ENCODE measurements at regions of chr14 and their contacts with region 1.

Region 1: DNA sequence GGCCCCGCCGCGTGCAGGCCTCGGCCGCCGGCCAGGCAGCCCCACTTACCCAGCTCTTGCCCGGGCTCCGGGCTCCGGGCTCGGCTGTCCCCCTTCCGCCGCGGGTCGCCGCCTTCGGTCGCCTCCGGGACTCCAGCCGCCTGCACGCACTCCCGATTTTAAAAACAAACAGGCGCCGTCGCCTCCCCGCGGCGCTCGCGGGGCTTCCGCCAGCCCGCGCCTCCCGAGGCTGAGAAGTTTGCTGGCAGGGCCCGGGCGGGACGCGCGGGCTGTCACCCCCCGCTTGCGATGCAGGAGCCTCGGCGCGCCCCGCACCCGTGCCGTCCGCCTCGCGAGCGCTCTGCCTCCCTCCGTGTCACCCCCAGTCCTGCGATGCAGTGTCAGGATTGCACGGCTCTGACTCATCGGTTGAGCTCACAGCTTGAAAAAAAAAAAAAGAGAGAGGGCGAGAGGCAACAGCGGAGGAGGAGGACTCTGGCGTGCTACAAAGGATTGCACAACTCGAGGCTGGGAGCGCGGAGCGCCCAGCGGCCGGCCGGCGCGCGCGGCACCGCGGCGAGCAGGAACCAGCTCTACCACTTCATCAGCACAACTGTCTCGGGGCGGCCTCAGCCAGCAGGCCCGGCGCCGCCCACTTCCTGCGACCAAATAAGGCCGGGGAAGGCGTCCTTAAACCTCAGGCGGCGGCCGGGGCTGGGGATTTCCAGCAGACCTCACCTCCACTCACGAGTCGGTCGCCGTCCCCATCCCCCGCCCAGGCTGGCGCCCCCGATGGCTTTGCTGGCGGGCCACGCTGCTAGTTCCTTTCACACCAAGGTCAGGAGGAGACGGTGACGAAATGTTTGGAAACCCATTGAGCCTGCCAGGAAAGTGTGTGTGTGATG is 45.8 kb upstream of the PNMA1 start:
- DNase-seq: peak; percentile 96 to 98 (median 98)
- H3K4me3 ChIP-seq: peak overlapping the region; percentile 72
- H3K4me3 Mint-ChIP-seq: peak overlapping the region; percentile 81 to 98 (median 92)
- H3K27ac ChIP-seq: peak overlapping the region; percentile 87
- H3K27ac Mint-ChIP-seq: peak overlapping the region; percentile 96 to 100 (median 99)
- H3K4me1 ChIP-seq: peaks cover 78% of the 10 kb centered on the region
- H3K4me1 Mint-ChIP-seq: peaks cover 78 to 85% (median 81%) of the 10 kb centered on the region in 3 donors
- H3K27me3 ChIP-seq: no peaks in the 10 kb centered on the region
- H3K27me3 Mint-ChIP-seq: peaks cover 0 to 4% of the 10 kb centered on the region in 2 donors

Region 2: DNA sequence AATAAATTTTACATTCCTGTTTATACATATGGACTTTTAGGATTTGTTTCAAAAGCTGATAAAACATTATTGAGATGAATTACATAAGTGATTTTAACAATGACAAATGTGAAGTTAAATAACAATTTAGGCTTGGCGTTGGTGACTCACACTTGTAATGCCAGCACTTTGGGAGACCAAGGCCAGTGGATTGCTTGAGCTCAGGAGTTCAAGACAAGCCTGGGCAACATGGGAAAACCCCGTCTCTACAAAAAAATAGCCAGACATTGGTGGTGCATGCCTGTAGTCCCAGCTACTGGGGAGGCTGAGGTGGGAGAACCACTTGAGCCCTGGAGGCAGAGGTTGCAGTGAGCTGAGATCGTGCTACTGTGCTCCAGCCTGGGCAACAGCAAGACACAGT is 183.6 kb before region 1 on chr14:
- CTCF ChIA-PET with region 1: no interaction called
- POLR2A ChIA-PET with region 1: no interaction called
- DNase-seq: no peak
- H3K4me3 ChIP-seq: no peak overlapping the region
- H3K4me3 Mint-ChIP-seq: no peak overlapping the region
- H3K27ac ChIP-seq: no peak overlapping the region
- H3K27ac Mint-ChIP-seq: no peak overlapping the region
- H3K4me1 ChIP-seq: no peaks in the 10 kb centered on the region
- H3K4me1 Mint-ChIP-seq: no peaks in the 10 kb centered on the region
- H3K27me3 ChIP-seq: no peaks in the 10 kb centered on the region
- H3K27me3 Mint-ChIP-seq: no peaks in the 10 kb centered on the region

Region 3: GRCh38 chr14:73700325-73700724 is 59.6 kb before region 1 on chr14:
- CTCF ChIA-PET with region 1: no interaction called
- POLR2A ChIA-PET with region 1: no interaction called
- DNase-seq: no peak
- H3K4me3 ChIP-seq: no peak overlapping the region
- H3K4me3 Mint-ChIP-seq: no peak overlapping the region
- H3K27ac ChIP-seq: no peak overlapping the region
- H3K27ac Mint-ChIP-seq: peak overlapping the region in 1 of 8 donors; percentile 7
- H3K4me1 ChIP-seq: no peaks in the 10 kb centered on the region
- H3K4me1 Mint-ChIP-seq: no peaks in the 10 kb centered on the region
- H3K27me3 ChIP-seq: no peaks in the 10 kb centered on the region
- H3K27me3 Mint-ChIP-seq: no peaks in the 10 kb centered on the region

Region 4: GRCh38 chr14:73728717-73729330 is 31.1 kb before region 1 on chr14:
- CTCF ChIA-PET with region 1: interaction called, 208 read pairs
- POLR2A ChIA-PET with region 1: interaction called, 8 read pairs
- DNase-seq: peak; percentile 71 to 87 (median 83)
- H3K4me3 ChIP-seq: no peak overlapping the region
- H3K4me3 Mint-ChIP-seq: no peak overlapping the region
- H3K27ac ChIP-seq: peak overlapping the region; percentile 17
- H3K27ac Mint-ChIP-seq: peak overlapping the region; percentile 71 to 94 (median 84)
- H3K4me1 ChIP-seq: peaks cover 9% of the 10 kb centered on the region
- H3K4me1 Mint-ChIP-seq: peaks cover 11 to 45% (median 23%) of the 10 kb centered on the region in 3 donors
- H3K27me3 ChIP-seq: no peaks in the 10 kb centered on the region
- H3K27me3 Mint-ChIP-seq: no peaks in the 10 kb centered on the region

Region 5: GRCh38 chr14:73746520-73747378 is 13.2 kb before region 1 on chr14:
- CTCF ChIA-PET with region 1: interaction called, 137 read pairs
- POLR2A ChIA-PET with region 1: interaction called, 67 read pairs
- DNase-seq: no peak
- H3K4me3 ChIP-seq: no peak overlapping the region
- H3K4me3 Mint-ChIP-seq: peak overlapping the region in 5 of 7 donors; percentile 8 to 59 (median 43)
- H3K27ac ChIP-seq: peak overlapping the region; percentile 21
- H3K27ac Mint-ChIP-seq: peak overlapping the region; percentile 68 to 98 (median 79)
- H3K4me1 ChIP-seq: peaks cover 98% of the 10 kb centered on the region
- H3K4me1 Mint-ChIP-seq: peaks cover 89 to 100% (median 97%) of the 10 kb centered on the region in 3 donors
- H3K27me3 ChIP-seq: no peaks in the 10 kb centered on the region
- H3K27me3 Mint-ChIP-seq: no peaks in the 10 kb centered on the region

Region 6: DNA sequence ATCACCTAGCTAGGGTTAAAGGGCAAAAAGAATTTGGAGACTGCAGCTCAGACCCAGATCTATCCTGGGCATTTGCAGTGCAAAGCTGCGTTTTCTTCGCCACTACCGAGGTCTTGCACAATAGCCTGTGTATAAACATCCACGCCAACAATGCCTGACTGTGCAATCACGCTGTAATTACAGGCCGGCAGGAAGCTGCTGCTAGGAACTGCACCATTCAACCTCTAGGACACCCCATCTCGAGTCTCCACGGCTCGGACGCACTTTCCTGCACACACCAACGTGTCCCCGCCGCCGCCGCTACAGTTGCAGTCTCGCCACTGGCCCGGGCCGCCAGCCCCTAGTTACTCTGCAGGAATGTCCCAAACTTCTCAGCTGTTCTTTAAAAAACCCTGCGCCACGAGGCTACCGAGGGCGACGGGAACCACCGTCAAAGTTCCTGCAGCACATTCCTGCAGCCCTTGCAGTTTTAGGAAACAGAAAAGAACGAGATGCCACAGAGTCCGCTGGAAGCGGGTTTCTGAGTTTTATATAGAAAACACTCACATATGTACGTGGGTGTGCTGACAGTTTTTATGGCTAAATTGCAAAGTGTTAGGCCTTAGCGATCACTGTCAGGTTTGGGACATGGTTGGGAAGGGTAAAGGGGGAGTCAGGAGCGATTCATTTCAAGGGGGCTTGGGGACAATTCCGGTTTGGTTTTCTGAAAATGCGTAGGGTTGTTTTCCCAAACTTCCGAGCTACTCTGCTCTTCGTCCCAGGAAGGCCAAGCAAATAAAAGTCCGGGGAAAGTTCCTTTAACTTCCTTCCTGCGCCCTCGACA is 26.1 kb after region 1 on chr14:
- CTCF ChIA-PET with region 1: interaction called, 358 read pairs
- POLR2A ChIA-PET with region 1: interaction called, 215 read pairs
- DNase-seq: peak; percentile 48 to 79 (median 60)
- H3K4me3 ChIP-seq: peak overlapping the region; percentile 73
- H3K4me3 Mint-ChIP-seq: peak overlapping the region; percentile 90 to 99 (median 97)
- H3K27ac ChIP-seq: peak overlapping the region; percentile 66
- H3K27ac Mint-ChIP-seq: peak overlapping the region; percentile 92 to 100 (median 98)
- H3K4me1 ChIP-seq: peaks cover 56% of the 10 kb centered on the region
- H3K4me1 Mint-ChIP-seq: peaks cover 58 to 66% (median 63%) of the 10 kb centered on the region in 3 donors
- H3K27me3 ChIP-seq: no peaks in the 10 kb centered on the region
- H3K27me3 Mint-ChIP-seq: peaks cover 0 to 3% of the 10 kb centered on the region in 2 donors

Region 7: DNA sequence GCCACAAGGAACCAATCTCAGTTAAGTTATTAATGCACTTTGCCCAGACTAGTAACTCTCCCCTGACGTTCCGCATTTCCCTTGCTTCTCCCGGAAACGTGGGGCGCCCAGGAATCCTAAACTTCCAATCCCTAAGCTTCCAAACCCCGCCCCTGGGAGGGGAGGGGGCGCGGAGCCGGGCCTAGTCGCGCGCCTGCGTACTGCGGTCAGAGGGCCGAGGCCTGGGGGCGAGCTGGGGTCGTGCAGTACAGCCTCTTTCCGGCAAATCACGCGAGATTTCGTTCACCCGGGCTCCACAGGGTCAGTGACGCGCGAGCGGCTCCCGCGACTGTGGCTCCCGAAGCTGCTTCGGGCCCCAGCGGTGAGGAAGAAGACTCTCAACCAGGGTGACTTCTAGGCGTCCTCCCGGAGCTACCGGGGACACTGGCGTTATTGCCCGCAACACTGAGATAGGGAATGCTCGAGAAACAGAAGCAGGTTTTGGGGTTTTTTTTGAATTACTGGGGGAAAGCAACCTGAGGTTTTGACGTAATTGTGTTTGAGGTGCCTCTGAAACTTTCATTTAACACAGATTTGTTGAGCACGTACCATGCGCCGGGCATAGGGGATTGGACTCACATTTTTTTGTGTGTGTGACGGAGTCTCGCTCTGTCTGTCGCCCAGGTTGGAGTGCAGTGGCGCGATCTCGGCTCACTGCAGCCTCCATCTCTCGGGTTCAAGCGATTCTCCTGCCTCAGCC is 91.9 kb after region 1 on chr14 and contains the start of gene PTGR2:
- CTCF ChIA-PET with region 1: interaction called, 11 read pairs
- POLR2A ChIA-PET with region 1: interaction called, 5 read pairs
- DNase-seq: peak; percentile 87 to 96 (median 90)
- H3K4me3 ChIP-seq: peak within 1 kb of the TSS; percentile 85
- H3K4me3 Mint-ChIP-seq: peak within 1 kb of the TSS; percentile 89 to 98 (median 94)
- H3K27ac ChIP-seq: peak within 1 kb of the TSS; percentile 85
- H3K27ac Mint-ChIP-seq: peak within 1 kb of the TSS; percentile 91 to 100 (median 98)
- H3K4me1 ChIP-seq: peaks cover 11% of the 10 kb centered on the region
- H3K4me1 Mint-ChIP-seq: peaks cover 16 to 24% (median 22%) of the 10 kb centered on the region in 3 donors
- H3K27me3 ChIP-seq: no peaks in the 10 kb centered on the region
- H3K27me3 Mint-ChIP-seq: no peaks in the 10 kb centered on the region
- total RNA-seq, gene PTGR2: 3.3 to 4.2 TPM